ENCODE measurements at regions of chr14 and their contacts with region 1.

Region 1: DNA sequence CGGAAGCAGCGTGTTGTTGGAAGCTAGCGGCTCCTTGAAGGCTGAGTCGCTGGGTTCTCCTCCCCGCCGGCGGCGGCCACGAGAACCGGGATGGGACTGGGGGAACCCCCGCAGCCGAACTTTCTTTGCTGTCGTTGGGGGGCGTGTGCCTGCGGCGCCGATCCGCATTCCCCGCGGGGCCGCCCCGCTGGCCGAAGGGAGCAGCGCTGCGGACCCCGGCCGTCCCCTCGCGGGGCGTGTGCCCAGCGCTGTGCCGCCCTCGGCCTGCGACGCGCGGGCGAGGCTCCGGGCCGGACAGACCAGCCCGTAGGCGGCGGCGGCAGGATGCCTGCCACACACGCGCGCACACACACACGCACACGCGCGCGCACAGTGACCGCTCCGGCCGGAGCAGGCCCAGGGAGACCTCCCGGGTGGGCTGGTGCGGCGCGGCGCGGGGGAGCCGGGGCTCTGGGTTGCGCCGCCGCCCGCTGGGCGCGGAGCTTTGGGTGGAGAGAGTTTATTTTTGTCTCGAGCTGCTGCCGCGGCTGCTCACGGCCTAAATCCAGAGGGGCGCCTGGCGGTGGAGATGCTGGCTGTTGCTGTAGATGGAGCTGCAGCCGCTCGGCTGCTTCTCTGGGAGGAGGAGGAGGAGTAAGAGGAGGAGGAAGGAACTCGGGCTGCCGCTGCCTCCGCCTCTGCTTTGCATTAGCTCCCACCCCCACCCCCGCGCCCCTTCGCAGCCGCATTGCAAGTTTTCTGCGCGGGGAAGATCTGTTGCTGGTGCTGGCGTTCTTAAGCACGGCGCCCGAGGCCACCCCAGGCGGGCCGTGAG is at the start of gene SAMD4A:
- DNase-seq: peak; percentile 85 to 91 (median 87)
- ATAC-seq: peak; percentile 41 to 65 (median 52)
- H3K4me3 ChIP-seq: peak within 1 kb of the TSS; percentile 58 to 91 (median 76)
- H3K27ac ChIP-seq: peak within 1 kb of the TSS; percentile 90 to 100 (median 99)
- H3K4me1 ChIP-seq: peaks cover 0 to 51% (median 32%) of the 10 kb centered on the region in 12 donors
- H3K27me3 ChIP-seq: no peaks in the 10 kb centered on the region
- CTCF ChIP-seq: peak in 11 of 12 donors; percentile 18 to 58 (median 34)
- POLR2A ChIP-seq: peak in 1 of 2 donors; percentile 44
- total RNA-seq, gene SAMD4A: 95.7 to 247 (median 159) TPM

Region 2: GRCh38 chr14:54299410-54300363 is 266.9 kb before region 1 on chr14:
- intact Hi-C with region 1: no loop called
- DNase-seq: peak in 3 of 5 donors; percentile 26 to 54 (median 36)
- ATAC-seq: peak; percentile 49 to 82 (median 70)
- H3K4me3 ChIP-seq: no peak overlapping the region
- H3K27ac ChIP-seq: peak overlapping the region in 6 of 12 donors; percentile 2 to 78 (median 65)
- H3K4me1 ChIP-seq: peaks cover 0 to 7% (median 0%) of the 10 kb centered on the region in 12 donors
- H3K27me3 ChIP-seq: peaks cover 0 to 6% (median 0%) of the 10 kb centered on the region in 9 donors
- CTCF ChIP-seq: no peak
- POLR2A ChIP-seq: no peak

Region 3: DNA sequence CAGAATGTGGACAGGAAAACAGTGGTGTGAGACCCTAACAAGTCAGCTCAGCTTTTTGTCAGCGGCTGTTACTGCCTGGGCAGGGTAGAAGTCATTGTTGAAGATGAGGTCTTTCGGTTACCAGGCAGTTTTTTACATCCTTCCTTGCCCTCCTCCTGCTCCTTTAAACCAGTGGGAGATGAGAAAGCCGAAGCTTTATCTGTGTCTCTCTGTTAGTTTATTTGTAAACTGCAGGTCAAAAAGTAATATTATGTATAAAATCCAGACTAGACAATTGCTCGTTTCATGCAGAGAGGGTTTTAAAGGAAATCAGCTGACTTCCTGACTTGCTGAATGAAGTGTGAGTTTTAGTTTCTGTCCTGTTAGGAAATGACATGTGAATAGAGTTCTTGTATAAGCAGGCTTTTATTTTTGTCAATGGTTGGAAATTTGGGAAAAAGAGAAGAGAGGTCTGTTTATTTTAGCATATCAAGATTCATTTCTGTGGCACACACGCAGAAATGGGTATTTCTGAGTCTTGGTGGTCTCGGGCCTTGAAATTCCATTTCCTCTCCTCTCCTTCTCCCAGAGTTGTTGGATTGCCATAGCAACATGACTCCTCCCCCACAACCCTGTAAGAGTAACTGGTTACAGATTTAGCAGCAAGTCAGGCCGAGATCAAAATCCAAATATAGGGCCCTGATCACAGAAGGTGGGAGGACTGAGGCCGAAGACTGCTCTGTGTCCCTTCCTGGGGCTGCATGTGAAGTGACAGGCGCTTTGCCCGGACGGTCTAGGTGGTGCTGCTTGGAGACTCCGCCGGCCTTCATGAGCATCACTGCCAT is 61.1 kb after region 1 on chr14:
- intact Hi-C with region 1: loop called in 4 of 10 experiments (anchors 2 to 10 kb)
- DNase-seq: peak in 4 of 5 donors; percentile 59 to 76 (median 70)
- ATAC-seq: peak; percentile 91 to 94 (median 93)
- H3K4me3 ChIP-seq: peak overlapping the region in 10 of 12 donors; percentile 14 to 51 (median 32)
- H3K27ac ChIP-seq: peak overlapping the region; percentile 24 to 96 (median 72)
- H3K4me1 ChIP-seq: peaks cover 16 to 76% (median 57%) of the 10 kb centered on the region in 12 donors
- H3K27me3 ChIP-seq: no peaks in the 10 kb centered on the region
- CTCF ChIP-seq: no peak
- POLR2A ChIP-seq: no peak

Region 4: DNA sequence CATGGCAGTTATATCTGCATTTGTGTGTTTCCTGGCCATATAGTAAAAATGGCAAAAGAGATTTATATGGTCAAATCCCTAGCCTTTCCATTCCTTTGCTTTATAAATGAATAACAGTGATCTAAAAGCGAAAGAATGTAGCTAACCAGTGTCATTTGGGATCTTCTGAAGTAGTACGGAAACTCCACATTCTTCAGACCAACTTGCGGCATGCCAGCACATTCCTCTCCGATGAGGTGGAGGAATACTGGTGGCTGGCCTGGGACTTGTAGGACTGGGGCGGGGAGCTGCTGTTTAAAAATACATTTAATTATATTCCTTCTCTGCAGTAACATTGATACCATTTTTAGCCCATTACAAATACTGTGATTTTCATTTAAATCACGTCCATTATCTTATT is 85.6 kb after region 1 on chr14:
- intact Hi-C with region 1: loop called in 4 of 10 experiments (anchors 5 to 10 kb)
- DNase-seq: peak; percentile 81 to 90 (median 89)
- ATAC-seq: peak; percentile 87 to 93 (median 90)
- H3K4me3 ChIP-seq: peak overlapping the region in 9 of 12 donors; percentile 7 to 47 (median 31)
- H3K27ac ChIP-seq: peak overlapping the region; percentile 82 to 90 (median 86)
- H3K4me1 ChIP-seq: peaks cover 19 to 98% (median 70%) of the 10 kb centered on the region in 12 donors
- H3K27me3 ChIP-seq: no peaks in the 10 kb centered on the region
- CTCF ChIP-seq: no peak
- POLR2A ChIP-seq: no peak

Region 5: DNA sequence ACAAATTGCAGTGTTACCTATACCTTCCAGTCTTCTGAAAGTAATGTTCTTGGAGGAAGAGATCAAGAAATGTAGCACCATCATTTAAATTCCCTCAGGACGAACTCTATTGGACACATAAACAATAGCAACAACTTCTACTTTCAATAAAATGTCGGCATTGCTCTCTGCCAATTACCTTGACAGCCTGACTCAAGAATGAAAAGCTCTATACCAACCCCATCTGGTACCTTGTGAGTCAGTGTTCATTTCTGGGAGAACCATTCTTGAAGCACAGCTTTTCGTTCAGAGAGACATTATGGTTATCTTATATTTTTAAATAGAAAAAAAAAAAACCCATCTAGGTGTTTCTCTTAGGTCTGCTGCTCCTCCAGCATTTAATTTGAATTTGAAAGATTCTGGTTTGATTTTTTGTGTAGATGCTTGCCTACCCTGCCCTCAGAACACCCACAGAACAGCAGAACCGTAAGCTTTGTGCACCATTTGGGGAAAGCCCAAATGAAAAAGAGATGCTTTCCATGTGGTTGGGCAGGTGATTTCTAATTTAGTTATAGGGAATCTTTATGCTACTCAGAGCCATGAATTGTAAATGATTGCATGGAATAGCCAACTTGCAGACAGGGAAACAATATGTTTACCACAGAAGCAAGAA is 156.3 kb after region 1 on chr14:
- intact Hi-C with region 1: loop called in 1 of 10 experiments (anchors 1 kb)
- DNase-seq: no peak
- ATAC-seq: peak; percentile 24 to 70 (median 54)
- H3K4me3 ChIP-seq: no peak overlapping the region
- H3K27ac ChIP-seq: peak overlapping the region in 5 of 12 donors; percentile 7 to 54 (median 35)
- H3K4me1 ChIP-seq: peaks cover 0 to 41% (median 18%) of the 10 kb centered on the region in 12 donors
- H3K27me3 ChIP-seq: no peaks in the 10 kb centered on the region
- CTCF ChIP-seq: peak; percentile 27 to 69 (median 45)
- POLR2A ChIP-seq: no peak

Region 6: DNA sequence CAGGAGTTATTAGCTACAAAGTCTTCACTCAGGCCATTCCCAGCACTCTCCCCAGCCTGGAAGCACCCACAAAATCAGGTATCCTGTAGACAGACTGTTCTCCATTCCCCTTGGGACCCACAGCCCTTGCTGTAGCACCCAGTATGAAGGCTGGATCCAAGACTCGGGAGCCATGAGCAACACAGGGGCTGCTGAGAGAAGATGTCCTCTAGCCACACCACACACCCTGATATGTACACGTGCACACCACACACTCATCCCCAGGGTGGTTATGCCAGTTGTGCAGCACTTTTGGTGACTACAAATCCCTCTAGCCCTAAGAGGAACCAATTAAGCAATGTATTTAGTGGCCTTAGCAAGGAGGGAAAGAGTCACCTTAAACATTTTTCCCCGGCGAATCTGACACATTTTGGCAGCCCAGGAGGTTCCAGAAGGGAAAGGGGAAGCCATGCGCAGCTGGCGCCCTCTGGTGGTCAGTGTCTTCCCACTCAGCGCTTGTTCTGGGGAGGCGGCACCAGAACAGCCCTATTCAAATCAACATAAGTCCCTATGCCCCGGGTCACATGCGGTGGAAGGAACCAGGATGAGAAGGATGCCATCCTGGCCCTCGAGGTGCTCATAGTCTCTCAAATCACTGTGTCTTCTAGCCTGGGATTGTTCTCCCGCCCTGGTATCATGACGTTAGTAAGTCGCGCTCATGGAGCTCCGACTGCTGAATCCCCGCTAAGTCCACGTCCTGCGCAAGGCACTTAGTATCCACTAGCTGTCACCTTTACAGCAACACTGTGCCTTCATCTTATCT is 239.1 kb after region 1 on chr14:
- intact Hi-C with region 1: loop called in 8 of 10 experiments (anchors 1 to 10 kb)
- DNase-seq: peak; percentile 81 to 91 (median 82)
- ATAC-seq: peak; percentile 82 to 94 (median 90)
- H3K4me3 ChIP-seq: peak overlapping the region in 8 of 12 donors; percentile 1 to 34 (median 16)
- H3K27ac ChIP-seq: no peak overlapping the region
- H3K4me1 ChIP-seq: peaks cover 0 to 11% (median 4%) of the 10 kb centered on the region in 12 donors
- H3K27me3 ChIP-seq: no peaks in the 10 kb centered on the region
- CTCF ChIP-seq: peak; percentile 91 to 98 (median 96)
- POLR2A ChIP-seq: no peak

Region 7: DNA sequence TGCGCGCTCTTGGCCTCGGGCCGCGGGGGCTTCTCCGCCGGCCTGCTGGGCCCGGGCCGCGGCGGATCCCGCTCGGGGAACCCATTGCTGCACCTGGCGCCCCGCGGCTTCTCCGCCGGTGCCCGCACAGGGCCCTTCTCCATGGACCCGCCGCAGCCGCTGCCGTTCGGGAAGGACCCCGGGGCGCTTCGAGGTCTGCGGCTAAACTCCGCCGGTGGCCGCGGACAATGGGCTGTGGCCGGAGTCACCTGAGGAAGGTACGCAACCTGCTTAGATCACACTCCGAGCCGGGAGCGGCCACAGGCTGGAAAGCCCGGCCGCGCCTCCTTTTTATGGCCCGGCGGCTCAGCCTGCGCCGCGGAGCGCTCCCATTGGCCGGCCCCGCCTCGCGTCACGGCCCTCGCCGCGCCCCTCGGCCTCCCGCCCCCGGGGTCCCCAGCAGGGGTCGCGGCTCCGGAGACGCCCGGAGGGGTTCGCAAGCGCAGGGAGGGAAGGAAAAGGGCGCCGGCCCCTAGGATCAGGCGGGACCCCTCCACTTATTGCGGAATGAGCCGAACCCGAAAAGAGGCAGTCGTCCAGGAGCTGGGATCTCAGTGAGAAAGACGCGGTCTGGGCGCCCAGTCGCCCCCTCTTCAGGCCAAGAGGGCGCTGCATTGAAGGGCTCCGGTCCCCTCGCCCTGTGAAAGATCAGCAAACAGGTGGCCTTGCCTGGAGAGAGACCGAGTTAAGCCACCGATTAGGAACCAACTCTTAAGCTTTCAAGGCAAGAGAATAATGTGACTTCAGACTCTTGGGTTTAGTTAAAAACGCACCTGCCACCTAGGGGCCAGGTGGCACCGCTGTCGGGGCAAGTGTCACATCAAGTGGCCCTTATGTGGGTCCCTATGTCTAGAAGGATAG is 336.2 kb after region 1 on chr14 and contains the start of gene GCH1:
- intact Hi-C with region 1: loop called in 2 of 10 experiments (anchors 5 to 10 kb)
- DNase-seq: peak; percentile 59 to 85 (median 76)
- ATAC-seq: peak; percentile 85 to 97 (median 93)
- H3K4me3 ChIP-seq: peak within 1 kb of the TSS; percentile 61 to 97 (median 82)
- H3K27ac ChIP-seq: peak within 1 kb of the TSS; percentile 62 to 91 (median 82)
- H3K4me1 ChIP-seq: peaks cover 0 to 29% (median 1%) of the 10 kb centered on the region in 12 donors
- H3K27me3 ChIP-seq: no peaks in the 10 kb centered on the region
- CTCF ChIP-seq: peak; percentile 36 to 75 (median 54)
- POLR2A ChIP-seq: peak in 1 of 2 donors; percentile 78
- total RNA-seq, gene GCH1: 1.6 to 13.8 (median 3.7) TPM